H1 (cell line): ENCODE measurements at regions of chr19 and their contacts with region 1.

Region 1: DNA sequence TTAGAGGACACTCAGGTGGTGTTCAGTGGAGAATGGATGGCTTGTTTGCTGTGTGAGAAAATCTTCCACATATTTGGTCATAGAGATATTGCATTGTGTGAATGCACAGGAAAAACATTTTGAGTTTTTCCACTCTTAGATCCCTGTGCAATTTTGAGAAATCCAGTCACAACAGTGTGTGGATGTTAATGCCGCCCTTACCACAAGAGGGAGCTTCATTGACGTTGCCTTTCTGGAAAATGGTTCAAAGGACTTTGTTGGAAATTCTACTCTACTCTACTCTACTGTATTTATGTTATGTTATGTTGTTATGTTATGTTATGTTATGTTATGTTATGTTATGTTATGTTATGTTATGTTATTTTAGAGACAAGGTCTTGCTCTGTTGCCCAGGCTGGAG is 13.4 kb downstream of the ZNF20 start:
- DNase-seq: peak in 1 of 2 experiments; percentile 54
- H3K4me3 ChIP-seq: no peak overlapping the region
- H3K27ac ChIP-seq: no peak overlapping the region
- H3K4me1 ChIP-seq: no peaks in the 10 kb centered on the region
- H3K27me3 ChIP-seq: no peaks in the 10 kb centered on the region
- CTCF ChIP-seq: peak in 2 of 3 experiments; percentile 45 to 68; a peak in 2 of 4 replicates
- EP300 ChIP-seq: no peak
- POLR2A ChIP-seq: no peak
- RAD21 ChIP-seq: peak; percentile 19 to 39

Region 2: DNA sequence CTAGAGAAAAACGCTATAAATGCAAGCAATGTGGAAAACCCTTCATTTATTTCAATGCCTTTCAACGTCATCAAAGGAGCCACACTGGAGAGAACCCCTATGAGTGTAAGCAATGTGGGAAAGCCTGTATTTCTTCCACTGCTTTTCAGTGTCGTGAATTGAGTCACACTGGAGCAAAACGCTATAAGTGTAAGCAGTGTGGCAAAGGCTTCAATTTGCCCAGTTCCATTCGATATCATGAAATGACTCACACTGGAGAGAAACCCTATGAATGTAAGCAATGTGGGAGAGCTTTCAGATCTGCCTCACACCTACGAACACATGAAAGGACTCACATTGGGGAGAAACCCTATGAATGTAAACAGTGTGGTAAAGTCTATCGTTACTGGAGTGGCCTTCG is 14.0 kb before region 1 on chr19:
- CTCF ChIA-PET with region 1: interaction called, 30 read pairs
- POLR2A ChIA-PET with region 1: interaction called, 12 read pairs
- DNase-seq: no peak
- H3K4me3 ChIP-seq: peak overlapping the region in 1 of 4 experiments; percentile 26; a peak in 1 of 8 replicates
- H3K27ac ChIP-seq: no peak overlapping the region
- H3K4me1 ChIP-seq: no peaks in the 10 kb centered on the region
- H3K27me3 ChIP-seq: no peaks in the 10 kb centered on the region
- CTCF ChIP-seq: no peak
- EP300 ChIP-seq: no peak
- POLR2A ChIP-seq: no peak
- RAD21 ChIP-seq: no peak

Region 3: GRCh38 chr19:12217332-12217731 is 90.6 kb after region 1 on chr19:
- CTCF ChIA-PET with region 1: no interaction called
- POLR2A ChIA-PET with region 1: no interaction called
- DNase-seq: no peak
- H3K4me3 ChIP-seq: no peak overlapping the region
- H3K27ac ChIP-seq: no peak overlapping the region
- H3K4me1 ChIP-seq: no peaks in the 10 kb centered on the region
- H3K27me3 ChIP-seq: no peaks in the 10 kb centered on the region
- CTCF ChIP-seq: no peak
- EP300 ChIP-seq: no peak
- POLR2A ChIP-seq: no peak
- RAD21 ChIP-seq: no peak